AG04449 (cell line): ENCODE measurements at regions of chr5 and their contacts with region 1.

Region 1: DNA sequence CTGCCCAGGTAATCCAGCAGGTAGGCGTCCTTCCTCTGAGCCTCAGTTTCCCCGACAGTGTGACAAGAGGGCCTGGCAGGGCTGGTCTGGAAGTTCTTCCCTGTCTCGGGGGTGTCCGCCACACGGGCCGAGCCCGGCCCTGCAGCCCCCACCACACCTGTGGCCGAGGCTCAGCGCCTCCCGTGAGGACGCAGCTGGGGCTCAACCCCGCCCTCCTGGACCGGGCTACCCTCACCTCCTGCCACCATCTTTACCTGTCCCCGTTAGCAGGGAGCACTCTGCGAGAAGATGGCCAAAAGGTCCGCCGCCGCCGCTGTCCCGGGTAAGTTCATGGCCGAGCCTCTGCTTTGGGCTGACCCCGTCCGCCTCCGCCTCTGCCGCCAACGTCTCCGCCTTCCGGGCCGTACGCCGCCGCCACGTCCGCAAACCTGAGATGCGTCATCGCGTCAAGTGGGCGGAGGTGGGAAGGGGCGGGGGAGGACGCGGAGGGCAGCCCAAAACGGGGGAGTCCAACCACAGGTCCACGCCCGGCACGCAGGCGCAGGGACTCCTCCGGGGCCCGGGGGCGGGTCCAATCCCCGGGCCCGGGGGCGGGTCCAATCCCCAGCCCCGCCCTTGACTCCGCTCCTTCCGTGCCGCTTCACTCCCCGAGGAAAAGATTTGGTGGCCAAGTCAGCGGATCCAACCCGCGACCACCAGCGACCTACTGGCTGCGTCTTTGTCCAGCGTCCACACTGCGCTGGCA is at the start of gene LYSMD3:
- DNase-seq: peak; percentile 69
- H3K4me3 ChIP-seq: peak within 1 kb of the TSS; percentile 96
- CTCF ChIP-seq: no peak

Region 2: GRCh38 chr5:90347462-90347861 is 181.9 kb before region 1 on chr5:
- CTCF ChIA-PET with region 1: no interaction called
- POLR2A ChIA-PET with region 1: no interaction called
- DNase-seq: no peak
- H3K4me3 ChIP-seq: no peak overlapping the region
- CTCF ChIP-seq: no peak

Region 3: DNA sequence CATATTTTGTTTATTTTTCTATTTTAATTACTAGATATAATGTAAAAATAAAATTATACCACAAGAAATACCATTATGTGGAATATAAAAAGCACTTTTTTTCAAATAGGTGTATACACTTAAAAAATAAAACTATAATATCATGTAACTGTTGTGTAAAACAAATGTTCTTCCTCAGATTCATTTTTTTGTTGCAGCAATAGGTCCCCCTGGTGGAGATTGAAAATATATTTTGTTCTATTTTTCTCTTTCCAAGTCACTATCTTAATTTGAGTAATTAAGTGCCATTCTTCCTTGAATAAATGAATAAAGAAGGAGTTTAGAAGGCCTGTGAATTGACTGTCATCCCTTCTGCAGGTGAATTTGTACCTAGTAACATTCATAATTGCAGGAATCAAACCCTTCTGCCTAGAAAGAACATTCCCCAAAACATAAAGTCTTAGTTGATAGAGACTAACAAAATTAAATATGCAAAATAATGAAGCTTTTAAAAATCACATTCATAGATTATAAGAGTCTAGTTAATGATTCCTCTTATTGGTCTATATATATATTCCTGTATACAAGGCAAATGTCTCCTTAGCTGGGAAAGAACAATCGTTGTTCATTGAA is 143.2 kb before region 1 on chr5:
- CTCF ChIA-PET with region 1: interaction called, 10 read pairs
- POLR2A ChIA-PET with region 1: no interaction called
- DNase-seq: no peak
- H3K4me3 ChIP-seq: no peak overlapping the region
- CTCF ChIP-seq: peak; percentile 14

Region 4: DNA sequence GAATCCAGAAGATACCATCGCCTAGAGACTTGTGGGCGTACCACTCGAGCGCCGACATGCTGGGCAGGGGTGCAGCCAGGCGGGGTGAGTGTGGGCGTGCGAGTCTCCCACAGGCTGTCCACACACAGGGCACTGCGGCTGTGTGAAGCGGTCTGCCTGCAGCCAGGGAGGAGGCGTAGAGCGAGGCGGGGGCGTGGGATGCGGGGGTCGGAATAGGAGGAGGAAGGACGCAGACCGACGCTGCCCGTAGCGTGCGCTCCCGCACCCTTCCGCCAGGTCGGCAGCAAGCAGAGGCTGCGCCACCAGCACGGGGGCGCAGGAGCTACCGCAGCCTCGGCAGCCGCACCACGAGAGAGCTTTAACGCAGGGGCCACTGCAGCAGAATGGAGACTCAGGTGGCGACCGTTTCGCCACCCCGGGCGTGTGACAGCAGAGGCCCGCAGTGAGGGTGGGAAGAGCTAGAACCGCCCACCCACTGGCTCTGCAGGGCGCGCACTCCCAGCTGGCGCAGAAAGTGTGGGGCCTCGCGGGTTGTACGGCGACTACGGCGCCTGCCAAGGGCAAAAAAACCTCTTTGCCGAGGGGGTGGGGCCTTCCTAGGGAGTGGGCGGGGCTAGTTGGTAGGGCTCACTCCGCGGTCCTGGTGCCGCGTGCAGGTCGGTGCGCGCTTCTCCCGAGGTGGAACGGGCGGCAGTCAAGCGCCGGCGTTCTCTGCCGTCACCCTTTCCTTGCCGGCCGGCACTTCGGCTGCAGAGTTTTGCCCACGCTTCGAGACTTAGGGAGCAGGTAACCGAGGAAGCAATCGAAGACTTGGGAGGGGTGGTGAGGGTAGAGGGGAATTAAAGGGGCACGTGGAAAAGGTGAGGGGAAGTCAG is 54.9 kb before region 1 on chr5 and contains the starts of genes MBLAC2 and POLR3G:
- CTCF ChIA-PET with region 1: interaction called, 19 read pairs
- POLR2A ChIA-PET with region 1: no interaction called
- DNase-seq: peak; percentile 44
- H3K4me3 ChIP-seq: peak within 1 kb of the TSS; percentile 88
- CTCF ChIP-seq: peak; percentile 66